Activated CD4-positive, alpha-beta T cell treated with anti-CD3 and anti-CD28 coated beads, Interleukin-2, amount 10 ng/mL, durations not matched to agents 24 days and 14 days (primary cell): ENCODE measurements at regions of chr14 and their contacts with region 1.

Region 1: DNA sequence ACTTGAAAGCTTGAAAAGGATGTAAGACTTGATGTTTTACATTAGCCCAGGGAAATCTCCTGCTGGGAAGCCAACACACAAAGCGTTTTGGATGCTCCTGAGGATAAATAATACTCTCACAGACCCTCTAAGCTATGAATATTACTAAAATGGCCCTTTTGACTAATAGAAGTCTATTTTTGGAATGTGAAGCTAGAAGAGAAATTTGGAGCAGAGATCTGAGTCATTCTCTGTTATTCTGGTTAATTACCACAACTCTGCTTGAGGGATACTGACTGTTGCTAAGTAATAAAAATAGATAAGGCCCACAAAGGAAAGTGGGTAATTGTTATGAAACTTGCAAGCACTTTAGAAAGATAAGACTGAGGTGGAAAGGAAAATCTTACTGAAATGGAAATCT is 346.2 kb upstream of the STXBP6 start:
- DNase-seq: no peak
- H3K4me3 Mint-ChIP-seq: no peak overlapping the region
- H3K27ac Mint-ChIP-seq: no peak overlapping the region
- H3K4me1 Mint-ChIP-seq: no peaks in the 10 kb centered on the region
- H3K27me3 Mint-ChIP-seq: no peaks in the 10 kb centered on the region

Region 2: GRCh38 chr14:24848102-24848820 is 547.9 kb before region 1 on chr14:
- intact Hi-C with region 1: no loop called
- DNase-seq: no peak
- H3K4me3 Mint-ChIP-seq: no peak overlapping the region
- H3K27ac Mint-ChIP-seq: no peak overlapping the region
- H3K4me1 Mint-ChIP-seq: no peaks in the 10 kb centered on the region
- H3K27me3 Mint-ChIP-seq: peaks cover 11% of the 10 kb centered on the region

Region 3: GRCh38 chr14:25349269-25349668 is 46.9 kb before region 1 on chr14:
- intact Hi-C with region 1: loop called (anchors 2 kb)
- DNase-seq: no peak
- H3K4me3 Mint-ChIP-seq: no peak overlapping the region
- H3K27ac Mint-ChIP-seq: no peak overlapping the region
- H3K4me1 Mint-ChIP-seq: peaks cover 2% of the 10 kb centered on the region
- H3K27me3 Mint-ChIP-seq: no peaks in the 10 kb centered on the region

Region 4: DNA sequence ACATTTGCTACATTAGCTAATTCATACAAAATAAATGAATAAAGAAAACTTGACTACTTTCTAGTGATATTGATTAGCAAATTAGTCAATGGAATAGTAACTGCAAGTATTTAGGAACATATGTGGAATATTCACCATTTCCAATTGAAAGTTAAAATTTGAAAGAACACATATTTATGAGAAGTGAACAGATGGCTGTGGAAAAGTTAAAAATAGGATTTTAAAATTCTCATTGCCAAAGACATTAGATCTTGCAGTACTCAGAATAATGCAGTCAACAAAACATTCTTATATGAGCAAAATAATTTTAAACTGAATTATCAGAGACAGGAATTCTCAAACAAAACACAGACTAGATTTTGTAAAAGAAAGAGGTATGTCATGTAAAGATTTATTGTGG is 1815.6 kb after region 1 on chr14:
- intact Hi-C with region 1: no loop called
- DNase-seq: no peak
- H3K4me3 Mint-ChIP-seq: no peak overlapping the region
- H3K27ac Mint-ChIP-seq: no peak overlapping the region
- H3K4me1 Mint-ChIP-seq: no peaks in the 10 kb centered on the region
- H3K27me3 Mint-ChIP-seq: no peaks in the 10 kb centered on the region